Common myeloid progenitor, CD34-positive (primary cell): ENCODE measurements at regions of chr2 and their contacts with region 1.

Region 1: GRCh38 chr2:101831351-101831865 is 133.9 kb downstream of the MAP4K4 start:
- DNase-seq: peak; percentile 61 to 78 (median 77)
- H3K4me3 ChIP-seq: no peak overlapping the region
- H3K27ac ChIP-seq: no peak overlapping the region
- H3K4me1 ChIP-seq: peaks cover 0 to 28% (median 5%) of the 10 kb centered on the region in 4 experiments
- H3K27me3 ChIP-seq: no peaks in the 10 kb centered on the region

Region 2: DNA sequence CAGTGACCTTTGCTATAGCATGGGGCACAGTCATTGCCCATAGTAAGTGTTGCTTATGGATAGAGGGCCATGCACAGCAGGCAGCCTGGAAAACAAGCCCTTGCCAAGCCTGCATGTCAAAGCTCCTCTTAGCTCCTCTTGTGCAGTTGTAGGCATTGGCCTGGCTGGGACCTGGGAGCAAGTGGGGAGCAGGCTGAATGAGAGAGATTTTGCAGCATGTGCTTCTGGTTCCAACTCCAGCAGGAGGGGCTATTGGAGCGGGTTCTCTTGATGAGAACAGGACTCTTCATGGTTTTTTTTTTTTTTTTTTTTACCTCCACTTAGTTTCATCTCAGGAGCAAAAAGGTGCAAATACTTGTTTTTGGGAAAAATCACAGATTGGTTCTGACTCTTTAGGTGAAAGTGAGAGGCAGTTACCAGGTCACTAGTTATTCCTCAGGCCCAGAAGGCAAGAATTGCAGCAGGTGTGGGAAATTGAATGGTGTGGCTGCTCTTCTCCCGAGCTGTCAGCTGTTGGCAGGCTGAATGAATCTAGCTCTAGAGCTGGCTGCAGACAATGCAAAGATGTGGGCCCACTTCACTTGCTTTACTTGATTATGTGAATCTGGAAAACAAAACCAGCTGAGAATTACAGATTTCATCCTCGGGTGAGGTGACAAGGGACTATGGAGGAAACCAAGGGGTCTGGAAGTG is 38.0 kb before region 1 on chr2:
- CTCF ChIA-PET with region 1: interaction called, 11 read pairs
- POLR2A ChIA-PET with region 1: no interaction called
- DNase-seq: peak in 1 of 3 donors; percentile 17
- H3K4me3 ChIP-seq: no peak overlapping the region
- H3K27ac ChIP-seq: no peak overlapping the region
- H3K4me1 ChIP-seq: peaks cover 0 to 14% (median 5%) of the 10 kb centered on the region in 4 experiments
- H3K27me3 ChIP-seq: no peaks in the 10 kb centered on the region

Region 3: DNA sequence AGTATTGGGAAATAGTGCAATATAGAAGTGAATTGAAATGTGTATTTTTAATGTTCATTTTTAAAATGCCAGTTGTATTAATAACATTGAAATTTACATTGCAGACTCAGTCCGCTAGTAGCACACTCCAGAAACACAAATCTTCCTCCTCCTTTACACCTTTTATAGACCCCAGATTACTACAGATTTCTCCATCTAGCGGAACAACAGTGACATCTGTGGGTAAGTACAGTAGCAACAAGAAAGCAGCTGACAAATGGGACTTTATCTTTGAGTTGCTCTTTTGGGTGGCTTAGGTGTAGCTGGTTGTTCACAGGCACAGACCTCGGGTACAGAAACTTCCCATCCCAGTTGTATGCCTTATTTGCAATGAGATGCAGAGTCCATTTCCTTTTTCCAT is 42.1 kb after region 1 on chr2:
- CTCF ChIA-PET with region 1: no interaction called
- POLR2A ChIA-PET with region 1: no interaction called
- DNase-seq: peak in 2 of 3 donors; percentile 27 to 39
- H3K4me3 ChIP-seq: no peak overlapping the region
- H3K27ac ChIP-seq: no peak overlapping the region
- H3K4me1 ChIP-seq: no peaks in the 10 kb centered on the region
- H3K27me3 ChIP-seq: no peaks in the 10 kb centered on the region